ENCODE measurements at regions of chr10 and their contacts with region 1.

Region 1: DNA sequence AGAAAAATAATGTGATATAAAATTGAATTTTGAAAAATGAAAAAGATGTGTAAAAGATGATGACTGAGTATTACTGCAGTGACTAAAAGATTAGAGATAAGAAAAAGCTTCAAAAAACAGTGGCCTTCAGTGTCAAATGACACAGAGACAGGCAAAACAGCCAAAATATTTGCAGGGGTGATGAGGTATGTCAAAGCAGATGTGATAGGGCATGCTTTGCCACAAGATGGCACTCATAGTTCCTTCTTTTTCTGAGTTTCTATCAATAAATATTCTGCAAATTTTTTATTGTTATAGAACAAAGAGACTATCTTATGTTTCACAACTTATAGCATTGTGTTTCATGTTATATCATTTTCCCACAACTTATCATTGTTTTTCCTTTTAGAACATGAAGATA is 344.1 kb upstream of the HPS1 start:
- DNase-seq: peak; percentile 15
- ATAC-seq: peak; percentile 64; the same call in 1 of the 2 replicates
- H3K4me3 ChIP-seq: no peak overlapping the region
- H3K27ac ChIP-seq: no peak overlapping the region
- H3K4me1 ChIP-seq: no peaks in the 10 kb centered on the region
- H3K27me3 ChIP-seq: peaks cover 22% of the 10 kb centered on the region
- CTCF ChIP-seq: peak; percentile 52 to 58 (median 57); a peak in 5 of 6 replicates
- POLR2A ChIP-seq: no peak
- RAD21 ChIP-seq: peak; percentile 62

Region 2: DNA sequence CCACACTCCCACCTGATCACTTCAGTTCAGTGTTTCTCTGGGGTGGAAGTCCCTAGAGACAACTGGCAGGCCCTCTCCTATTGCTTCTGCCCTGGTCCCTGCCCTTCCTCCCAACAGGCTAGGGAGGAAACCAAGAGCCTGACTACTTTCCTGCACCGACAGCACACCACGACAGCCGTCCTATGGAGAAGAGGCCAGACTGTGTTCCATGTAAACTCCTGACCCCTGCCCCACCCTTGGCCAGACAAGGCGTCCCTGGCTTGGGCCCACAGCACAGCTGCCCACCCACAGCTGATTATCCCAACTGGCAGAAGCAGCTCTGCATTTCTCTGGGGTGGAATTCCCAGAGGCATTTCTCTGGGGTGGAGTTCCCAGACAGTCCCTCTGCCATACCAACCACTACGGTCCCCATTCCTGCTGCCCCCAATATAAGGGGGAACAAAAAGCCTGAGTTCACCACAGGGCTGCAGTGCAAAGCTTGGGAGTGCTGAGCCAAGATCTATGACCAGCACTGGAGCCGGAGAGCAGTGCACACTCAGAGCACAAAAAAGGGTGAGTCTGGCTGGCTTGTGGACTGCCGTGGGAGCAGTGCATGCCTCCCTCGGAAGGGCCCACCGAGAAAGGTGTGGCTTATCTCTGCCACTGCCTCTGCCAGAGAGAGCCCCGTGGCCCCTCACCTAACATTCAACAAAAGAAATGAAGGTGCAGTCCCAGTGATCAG is 251.4 kb after region 1 on chr10:
- CTCF ChIA-PET with region 1: interaction called, 3 read pairs
- POLR2A ChIA-PET with region 1: no interaction called
- RAD21 ChIA-PET with region 1: no interaction called
- intact Hi-C with region 1: loop called (anchors 5 kb)
- DNase-seq: no peak
- ATAC-seq: peak; percentile 67
- H3K4me3 ChIP-seq: no peak overlapping the region
- H3K27ac ChIP-seq: no peak overlapping the region
- H3K4me1 ChIP-seq: no peaks in the 10 kb centered on the region
- H3K27me3 ChIP-seq: peaks cover 8% of the 10 kb centered on the region; the same call in 1 of the 2 replicates
- CTCF ChIP-seq: no peak
- POLR2A ChIP-seq: no peak
- RAD21 ChIP-seq: no peak

Region 3: GRCh38 chr10:99172130-99172738 is 381.4 kb after region 1 on chr10:
- CTCF ChIA-PET with region 1: no interaction called
- POLR2A ChIA-PET with region 1: no interaction called
- RAD21 ChIA-PET with region 1: no interaction called
- intact Hi-C with region 1: loop called (anchors 5 kb)
- DNase-seq: peak; percentile 51
- ATAC-seq: peak; percentile 90
- H3K4me3 ChIP-seq: no peak overlapping the region
- H3K27ac ChIP-seq: no peak overlapping the region
- H3K4me1 ChIP-seq: no peaks in the 10 kb centered on the region
- H3K27me3 ChIP-seq: peaks cover 47% of the 10 kb centered on the region
- CTCF ChIP-seq: peak; percentile 55 to 89 (median 89); a peak in 5 of 6 replicates
- POLR2A ChIP-seq: no peak
- RAD21 ChIP-seq: peak; percentile 77

Region 4: GRCh38 chr10:99248824-99249223 is 458.0 kb after region 1 on chr10:
- CTCF ChIA-PET with region 1: no interaction called
- POLR2A ChIA-PET with region 1: no interaction called
- RAD21 ChIA-PET with region 1: no interaction called
- intact Hi-C with region 1: loop called (anchors 5 kb)
- DNase-seq: no peak
- ATAC-seq: no peak
- H3K4me3 ChIP-seq: no peak overlapping the region
- H3K27ac ChIP-seq: no peak overlapping the region
- H3K4me1 ChIP-seq: no peaks in the 10 kb centered on the region
- H3K27me3 ChIP-seq: no peaks in the 10 kb centered on the region
- CTCF ChIP-seq: no peak
- POLR2A ChIP-seq: no peak
- RAD21 ChIP-seq: no peak

Region 5: DNA sequence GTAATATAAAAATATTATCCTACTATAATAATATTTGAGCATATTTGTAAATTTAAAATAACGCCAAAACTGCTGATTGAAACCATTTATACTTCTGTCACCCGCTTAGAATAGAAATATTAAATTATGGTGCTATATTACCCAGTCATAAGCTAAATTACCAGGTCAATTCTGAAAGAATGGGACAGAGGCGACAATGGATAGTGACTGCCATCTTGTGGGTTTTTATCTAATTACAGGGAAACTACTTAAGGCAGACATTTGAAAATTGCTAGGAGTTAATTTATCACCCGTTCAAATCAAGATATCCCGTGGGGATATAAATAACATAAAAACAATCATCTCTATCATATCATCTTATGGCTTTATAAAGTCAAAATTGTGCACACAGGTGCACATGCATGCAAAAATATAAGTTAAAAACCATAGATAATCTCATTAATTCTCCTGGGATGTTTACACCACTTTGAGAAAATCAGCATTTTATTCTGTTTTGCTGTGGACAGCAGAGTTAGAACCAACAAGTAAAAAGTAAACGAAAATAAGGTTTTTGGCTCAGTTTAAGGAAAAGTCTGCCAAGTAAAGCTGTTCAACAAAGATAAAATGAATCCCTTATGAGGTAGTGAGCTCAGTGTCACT is 486.2 kb after region 1 on chr10:
- CTCF ChIA-PET with region 1: no interaction called
- POLR2A ChIA-PET with region 1: no interaction called
- RAD21 ChIA-PET with region 1: no interaction called
- intact Hi-C with region 1: loop called (anchors 5 kb)
- DNase-seq: peak; percentile 46
- ATAC-seq: peak; percentile 81
- H3K4me3 ChIP-seq: no peak overlapping the region
- H3K27ac ChIP-seq: no peak overlapping the region
- H3K4me1 ChIP-seq: no peaks in the 10 kb centered on the region
- H3K27me3 ChIP-seq: peaks cover 15% of the 10 kb centered on the region
- CTCF ChIP-seq: peak; percentile 60 to 86 (median 65); a peak in 5 of 6 replicates
- POLR2A ChIP-seq: no peak
- RAD21 ChIP-seq: peak; percentile 85

Measured in HCT116 (cell line).